Endothelial cell of umbilical vein (primary cell): ENCODE measurements at regions of chr22 and their contacts with region 1.

Region 1: DNA sequence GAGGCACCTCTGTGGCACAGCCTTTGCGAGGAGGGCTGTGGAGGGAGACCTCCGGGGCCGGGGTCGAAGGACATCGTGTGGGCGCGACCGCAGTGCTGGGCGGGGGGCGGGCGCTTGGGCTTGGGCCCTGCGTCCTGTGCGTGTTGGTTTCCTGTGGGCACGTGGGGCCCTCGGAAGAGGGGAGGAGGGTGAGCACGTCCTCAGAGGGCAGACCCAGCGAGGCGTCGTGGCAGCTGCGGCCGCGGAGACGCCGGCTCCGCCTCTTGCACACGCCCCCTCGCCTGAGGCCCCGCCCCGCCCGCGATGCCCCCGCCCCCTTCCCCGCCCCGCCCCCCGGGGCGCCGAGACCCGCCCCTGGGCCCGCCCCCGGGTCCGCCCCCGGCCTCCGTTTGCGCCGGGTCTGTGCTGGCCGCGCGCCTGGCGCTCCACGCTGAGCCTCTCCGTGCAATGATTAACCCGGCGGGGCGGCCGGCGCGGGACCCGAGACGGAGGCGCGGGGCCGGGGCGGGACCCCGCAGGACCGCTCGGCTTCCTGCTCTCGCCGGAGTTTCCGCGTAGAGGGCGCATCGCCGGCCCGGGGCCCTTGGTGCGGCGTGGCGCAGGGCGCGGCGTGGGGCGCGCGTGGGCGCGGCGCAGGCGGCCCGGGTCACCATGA is at the start of gene PRR5:
- DNase-seq: peak; percentile 63
- H3K4me3 ChIP-seq: peak within 1 kb of the TSS; percentile 16 to 36 (median 32)
- H3K27ac ChIP-seq: no peak within 1 kb of the TSS
- H3K4me1 ChIP-seq: peaks cover 7% of the 10 kb centered on the region
- H3K27me3 ChIP-seq: peaks cover 6 to 11% of the 10 kb centered on the region in 2 experiments
- CTCF ChIP-seq: no peak
- POLR2A ChIP-seq: no peak
- total RNA-seq, gene PRR5: 7.4 and 9.0 TPM in 2 replicates

Region 2: DNA sequence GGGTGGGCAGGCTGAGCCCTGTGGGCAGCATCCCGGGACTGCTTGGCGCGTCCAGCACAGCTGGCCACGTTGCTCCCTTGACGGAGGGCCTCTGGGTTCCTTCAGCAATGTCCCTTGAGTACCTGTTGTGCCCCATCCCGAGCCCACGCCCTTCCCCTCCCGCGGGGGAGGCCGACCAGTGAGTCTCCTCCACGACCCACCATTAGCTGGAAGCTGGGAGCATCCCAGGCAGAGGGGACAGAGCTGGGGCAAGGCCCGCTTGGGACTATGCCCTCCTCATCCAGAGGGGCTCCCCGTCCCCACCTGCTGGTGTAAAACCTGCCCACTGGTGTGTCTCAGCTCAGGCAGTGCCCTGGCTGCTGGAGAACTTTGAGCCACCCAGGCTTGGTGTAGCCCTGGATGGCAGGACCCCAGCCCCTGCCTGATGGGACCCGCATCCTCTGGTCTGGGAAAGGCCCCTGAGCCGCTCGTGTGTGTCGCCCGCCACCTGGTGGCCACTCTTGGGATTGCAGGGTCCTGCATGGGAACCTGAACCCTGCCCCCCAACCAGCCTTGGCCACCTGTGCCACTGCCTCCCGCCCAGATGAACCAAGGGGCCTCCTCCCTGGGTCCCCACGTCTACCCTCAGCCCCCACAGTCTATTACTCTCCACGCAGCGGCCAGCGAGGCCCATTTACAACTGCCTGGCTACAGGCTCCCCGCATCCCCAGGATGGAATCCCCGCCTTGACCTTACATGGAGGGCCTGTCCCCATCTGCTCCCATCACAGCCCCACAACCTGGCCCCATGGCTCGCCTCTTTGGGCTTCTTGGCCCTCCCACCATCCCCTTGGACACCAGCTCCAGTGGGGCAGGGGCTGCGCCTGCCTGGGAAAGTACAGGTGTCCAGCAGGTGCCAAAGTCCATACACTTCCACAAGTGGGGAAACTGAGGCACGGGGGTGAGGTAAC is 33.9 kb after region 1 on chr22:
- CTCF ChIA-PET with region 1: interaction called, 41 read pairs
- POLR2A ChIA-PET with region 1: no interaction called
- dilution Hi-C with region 1: no loop called
- intact Hi-C with region 1: loop called (anchors 1 kb)
- DNase-seq: peak; percentile 36
- H3K4me3 ChIP-seq: no peak overlapping the region
- H3K27ac ChIP-seq: no peak overlapping the region
- H3K4me1 ChIP-seq: no peaks in the 10 kb centered on the region
- H3K27me3 ChIP-seq: no peaks in the 10 kb centered on the region
- CTCF ChIP-seq: peak; percentile 93 to 95
- POLR2A ChIP-seq: no peak